ENCODE measurements at regions of chr14 and their contacts with region 1.

Region 1: GRCh38 chr14:36373982-36374673 is 53.7 kb upstream of the MBIP start:
- DNase-seq: peak in 2 of 3 donors; percentile 71 to 94
- ATAC-seq: peak; percentile 97
- H3K4me3 ChIP-seq: no peak overlapping the region
- H3K4me1 ChIP-seq: no peaks in the 10 kb centered on the region
- CTCF ChIP-seq: peak; percentile 79

Region 2: GRCh38 chr14:36207500-36207899 is 166.6 kb before region 1 on chr14:
- intact Hi-C with region 1: loop called in 1 of 2 experiments (anchors 10 kb)
- DNase-seq: no peak
- ATAC-seq: peak; percentile 74
- H3K4me3 ChIP-seq: no peak overlapping the region
- H3K4me1 ChIP-seq: no peaks in the 10 kb centered on the region
- CTCF ChIP-seq: peak; percentile 11

Region 3: GRCh38 chr14:36271939-36272907 is 101.9 kb before region 1 on chr14:
- intact Hi-C with region 1: no loop called
- DNase-seq: peak in 2 of 3 donors; percentile 32 to 43
- ATAC-seq: peak; percentile 60
- H3K4me3 ChIP-seq: no peak overlapping the region
- H3K4me1 ChIP-seq: peaks cover 9% of the 10 kb centered on the region
- CTCF ChIP-seq: no peak